Calu3 (cell line): ENCODE measurements at regions of chr1 and their contacts with region 1.

Region 1: DNA sequence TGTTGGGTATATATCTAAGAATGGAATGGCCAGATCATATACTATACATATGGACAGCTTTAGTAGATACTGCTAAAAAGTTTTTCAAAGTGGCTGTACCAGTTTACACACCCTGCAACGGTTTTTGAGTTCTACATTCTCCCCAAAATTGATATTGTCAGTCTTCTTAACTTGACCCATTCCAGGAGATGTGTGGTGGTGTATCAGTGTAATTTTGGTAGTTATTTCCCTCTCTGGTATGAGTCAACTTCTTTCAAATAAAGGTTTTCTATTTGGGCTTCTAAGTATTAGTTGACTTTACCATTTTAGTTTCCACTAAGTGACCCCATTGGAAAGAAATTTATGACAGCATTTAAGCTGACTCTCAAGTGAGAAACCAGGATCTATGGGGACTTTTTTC is 29.2 kb downstream of the INKA2 start:
- DNase-seq: no peak
- H3K4me3 Mint-ChIP-seq: no peak overlapping the region
- H3K27ac Mint-ChIP-seq: no peak overlapping the region
- H3K4me1 Mint-ChIP-seq: no peaks in the 10 kb centered on the region
- H3K27me3 Mint-ChIP-seq: no peaks in the 10 kb centered on the region
- CTCF ChIP-seq: no peak

Region 2: DNA sequence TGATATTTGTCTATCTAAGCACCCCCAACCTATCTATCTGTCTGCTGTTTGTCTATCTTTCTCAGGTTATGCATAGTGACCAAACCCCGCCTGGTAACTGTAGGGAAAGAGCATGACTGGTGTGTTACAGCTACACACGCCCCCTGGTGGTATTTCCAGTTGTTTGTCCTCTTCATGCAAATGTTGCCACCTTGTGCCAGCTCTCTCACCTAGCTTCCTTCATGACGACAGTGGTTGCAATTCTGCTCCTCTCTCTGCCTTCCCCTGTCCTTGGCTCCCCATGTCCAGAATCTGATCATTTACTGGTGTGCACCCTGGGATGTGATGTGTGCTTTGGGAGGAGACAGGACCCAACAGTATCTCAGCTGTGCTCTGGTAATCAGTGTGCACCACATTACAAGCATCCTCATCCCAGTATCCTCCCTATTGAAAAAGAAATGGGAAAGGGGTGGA is 37.3 kb after region 1 on chr1:
- CTCF ChIA-PET with region 1: interaction called, 15 read pairs
- intact Hi-C with region 1: loop called (anchors 5 kb)
- DNase-seq: peak; percentile 68
- H3K4me3 Mint-ChIP-seq: no peak overlapping the region
- H3K27ac Mint-ChIP-seq: no peak overlapping the region
- H3K4me1 Mint-ChIP-seq: no peaks in the 10 kb centered on the region
- H3K27me3 Mint-ChIP-seq: peaks cover 67% of the 10 kb centered on the region
- CTCF ChIP-seq: peak; percentile 53